ENCODE measurements at regions of chr4 and their contacts with region 1.

Region 1: GRCh38 chr4:73258686-73259570 is at the start of gene ANKRD17:
- DNase-seq: peak; percentile 98
- total RNA-seq, gene ANKRD17: 44.9 to 50.5 TPM

Region 2: GRCh38 chr4:71775449-71775848 is 1483.5 kb before region 1 on chr4:
- intact Hi-C with region 1: loop called in 1 of 2 experiments (anchors 5 kb)
- DNase-seq: no peak

Region 3: GRCh38 chr4:73142995-73143547 is 115.9 kb before region 1 on chr4:
- intact Hi-C with region 1: loop called in 1 of 2 experiments (anchors 10 kb)
- DNase-seq: no peak

Measured in posterior vena cava (tissue), 2 donors.